CD8-positive, alpha-beta memory T cell (primary cell): ENCODE measurements at regions of chr17 and their contacts with region 1.

Region 1: GRCh38 chr17:7687908-7688807 is at the start of gene WRAP53:
- DNase-seq: peak; percentile 88 to 96 (median 94)
- H3K4me3 ChIP-seq: peak within 1 kb of the TSS; percentile 99
- H3K4me3 Mint-ChIP-seq: peak within 1 kb of the TSS; percentile 93 to 99 (median 98)
- H3K27ac ChIP-seq: peak within 1 kb of the TSS; percentile 99
- H3K27ac Mint-ChIP-seq: peak within 1 kb of the TSS; percentile 98 to 100 (median 100)
- H3K4me1 ChIP-seq: peaks cover 37% of the 10 kb centered on the region
- H3K4me1 Mint-ChIP-seq: peaks cover 39 to 55% (median 44%) of the 10 kb centered on the region in 3 donors
- H3K27me3 ChIP-seq: no peaks in the 10 kb centered on the region
- H3K27me3 Mint-ChIP-seq: peaks cover 0 to 7% of the 10 kb centered on the region in 2 donors
- total RNA-seq, gene WRAP53: 29.1 to 31.3 TPM

Region 2: GRCh38 chr17:7484067-7484918 is 203.9 kb before region 1 on chr17 and contains the start of gene POLR2A:
- CTCF ChIA-PET with region 1: interaction called, 3 read pairs
- POLR2A ChIA-PET with region 1: interaction called, 29 read pairs
- DNase-seq: peak; percentile 95 to 99 (median 98)
- H3K4me3 ChIP-seq: peak within 1 kb of the TSS; percentile 91
- H3K4me3 Mint-ChIP-seq: peak within 1 kb of the TSS; percentile 96 to 100 (median 98)
- H3K27ac ChIP-seq: peak within 1 kb of the TSS; percentile 98
- H3K27ac Mint-ChIP-seq: peak within 1 kb of the TSS; percentile 99 to 100 (median 100)
- H3K4me1 ChIP-seq: peaks cover 49% of the 10 kb centered on the region
- H3K4me1 Mint-ChIP-seq: peaks cover 56 to 80% (median 73%) of the 10 kb centered on the region in 3 donors
- H3K27me3 ChIP-seq: no peaks in the 10 kb centered on the region
- H3K27me3 Mint-ChIP-seq: peaks cover 0 to 12% of the 10 kb centered on the region in 2 donors
- total RNA-seq, gene POLR2A: 190 to 192 TPM

Region 3: GRCh38 chr17:7572588-7573323 is 115.4 kb before region 1 on chr17:
- CTCF ChIA-PET with region 1: interaction called, 8 read pairs
- POLR2A ChIA-PET with region 1: interaction called, 24 read pairs
- DNase-seq: peak; percentile 99 to 100 (median 100)
- H3K4me3 ChIP-seq: peak overlapping the region; percentile 98
- H3K4me3 Mint-ChIP-seq: peak overlapping the region; percentile 93 to 98 (median 96)
- H3K27ac ChIP-seq: peak overlapping the region; percentile 99
- H3K27ac Mint-ChIP-seq: peak overlapping the region; percentile 96 to 100 (median 98)
- H3K4me1 ChIP-seq: peaks cover 31% of the 10 kb centered on the region
- H3K4me1 Mint-ChIP-seq: peaks cover 39 to 55% (median 48%) of the 10 kb centered on the region in 3 donors
- H3K27me3 ChIP-seq: no peaks in the 10 kb centered on the region
- H3K27me3 Mint-ChIP-seq: peaks cover 0 to 7% of the 10 kb centered on the region in 2 donors

Region 4: DNA sequence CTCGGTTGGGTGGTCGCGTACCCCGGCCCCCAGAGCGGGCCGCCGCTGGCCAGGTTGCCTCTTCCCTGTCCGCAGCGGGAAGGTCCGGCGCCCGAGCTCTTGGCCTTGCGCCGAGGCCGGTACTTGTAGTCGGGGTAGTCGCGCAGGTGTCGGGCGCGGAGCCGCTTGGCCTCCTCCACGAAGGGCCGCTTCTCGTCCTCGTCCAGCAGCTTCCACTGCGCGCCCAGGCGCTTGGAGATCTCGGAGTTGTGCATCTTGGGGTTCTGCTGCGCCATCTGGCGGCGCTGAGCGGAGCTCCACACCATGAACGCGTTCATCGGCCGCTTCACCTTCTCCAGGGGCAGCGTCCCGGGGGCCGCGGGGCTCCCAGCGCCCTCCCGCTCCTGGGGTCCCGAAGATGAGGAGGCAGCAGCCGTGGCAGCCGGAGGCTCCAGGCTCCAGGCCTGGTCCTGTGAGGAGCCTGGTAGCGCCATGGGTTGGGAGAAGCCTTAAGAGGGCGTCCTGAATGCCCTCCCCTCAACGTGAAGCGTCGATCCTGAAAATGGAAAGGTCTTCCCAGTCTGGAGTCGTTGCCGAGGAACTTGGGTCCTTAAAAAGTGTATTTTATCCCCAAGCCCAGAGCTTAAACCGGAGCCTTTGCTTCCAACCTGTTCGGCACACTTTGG is 98.8 kb before region 1 on chr17:
- CTCF ChIA-PET with region 1: interaction called, 33 read pairs
- POLR2A ChIA-PET with region 1: interaction called, 70 read pairs
- DNase-seq: peak; percentile 37 to 76 (median 47)
- H3K4me3 ChIP-seq: no peak overlapping the region
- H3K4me3 Mint-ChIP-seq: peak overlapping the region in 1 of 7 donors; percentile 65
- H3K27ac ChIP-seq: no peak overlapping the region
- H3K27ac Mint-ChIP-seq: peak overlapping the region in 1 of 8 donors; percentile 83
- H3K4me1 ChIP-seq: peaks cover 8% of the 10 kb centered on the region
- H3K4me1 Mint-ChIP-seq: peaks cover 7 to 13% (median 12%) of the 10 kb centered on the region in 3 donors
- H3K27me3 ChIP-seq: no peaks in the 10 kb centered on the region
- H3K27me3 Mint-ChIP-seq: no peaks in the 10 kb centered on the region

Region 5: DNA sequence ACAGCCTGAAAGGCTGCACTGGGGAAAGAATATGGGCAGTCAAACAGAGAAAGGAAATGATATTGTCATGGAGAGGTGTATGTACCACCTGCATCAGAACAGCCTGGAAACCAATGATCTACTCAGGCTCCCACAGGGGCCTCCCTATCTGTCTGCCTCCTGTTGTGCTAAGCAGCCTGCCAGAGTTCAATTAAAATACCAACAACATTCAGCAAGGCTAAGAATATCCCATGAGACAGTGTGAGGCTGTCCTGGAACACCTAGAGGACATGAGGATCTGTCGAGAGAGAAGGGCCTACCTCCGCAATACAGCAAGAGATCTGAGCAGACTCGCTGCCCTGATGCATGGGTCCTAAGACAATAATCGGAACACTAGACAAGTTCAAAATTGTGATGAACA is 81.9 kb before region 1 on chr17:
- CTCF ChIA-PET with region 1: no interaction called
- POLR2A ChIA-PET with region 1: no interaction called
- DNase-seq: no peak
- H3K4me3 ChIP-seq: no peak overlapping the region
- H3K4me3 Mint-ChIP-seq: no peak overlapping the region
- H3K27ac ChIP-seq: no peak overlapping the region
- H3K27ac Mint-ChIP-seq: peak overlapping the region in 2 of 8 donors; percentile 19 to 63
- H3K4me1 ChIP-seq: no peaks in the 10 kb centered on the region
- H3K4me1 Mint-ChIP-seq: peaks cover 21 to 27% (median 25%) of the 10 kb centered on the region in 3 donors
- H3K27me3 ChIP-seq: no peaks in the 10 kb centered on the region
- H3K27me3 Mint-ChIP-seq: no peaks in the 10 kb centered on the region

Region 6: GRCh38 chr17:7627250-7628121 is 60.7 kb before region 1 on chr17 and contains the start of gene SAT2:
- CTCF ChIA-PET with region 1: interaction called, 33 read pairs
- POLR2A ChIA-PET with region 1: interaction called, 42 read pairs
- DNase-seq: peak; percentile 80 to 93 (median 82)
- H3K4me3 ChIP-seq: peak within 1 kb of the TSS; percentile 90
- H3K4me3 Mint-ChIP-seq: peak within 1 kb of the TSS; percentile 90 to 95 (median 93)
- H3K27ac ChIP-seq: peak within 1 kb of the TSS; percentile 69
- H3K27ac Mint-ChIP-seq: peak within 1 kb of the TSS; percentile 70 to 97 (median 91)
- H3K4me1 ChIP-seq: peaks cover 10% of the 10 kb centered on the region
- H3K4me1 Mint-ChIP-seq: peaks cover 12 to 20% (median 13%) of the 10 kb centered on the region in 3 donors
- H3K27me3 ChIP-seq: no peaks in the 10 kb centered on the region
- H3K27me3 Mint-ChIP-seq: no peaks in the 10 kb centered on the region
- total RNA-seq, gene SAT2: 18.4 to 21.6 TPM

Region 7: DNA sequence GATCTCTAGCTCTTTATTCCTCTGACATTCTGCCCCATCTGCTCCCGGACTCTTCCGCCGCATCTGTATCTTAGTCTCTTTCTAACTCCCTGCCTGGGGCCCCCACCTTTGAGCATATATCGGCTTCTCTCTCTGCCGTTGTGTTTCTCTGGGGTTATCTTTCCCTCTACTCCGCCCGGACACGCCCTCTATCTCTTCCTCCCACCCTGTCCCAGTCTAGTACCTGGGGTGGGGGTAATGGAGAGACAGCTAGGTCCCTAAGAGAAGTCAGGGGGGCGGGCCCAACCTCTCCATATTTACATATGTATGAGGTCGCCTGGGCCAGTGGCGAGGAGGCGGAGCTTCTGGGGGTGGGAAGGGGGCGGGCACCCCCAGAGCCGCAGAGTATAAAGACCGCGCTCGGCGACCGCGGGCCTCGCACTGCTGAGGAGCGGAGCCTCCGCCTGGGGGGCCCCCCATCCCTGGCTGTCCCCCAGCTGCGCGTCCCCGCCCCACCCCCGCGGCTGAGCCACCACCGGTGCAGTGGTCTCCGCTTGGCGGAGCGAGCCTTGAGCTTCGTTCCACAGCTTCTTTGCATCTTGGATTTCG is 37.6 kb before region 1 on chr17 and contains the start of gene ATP1B2:
- CTCF ChIA-PET with region 1: interaction called, 10 read pairs
- POLR2A ChIA-PET with region 1: interaction called, 23 read pairs
- DNase-seq: peak; percentile 59 to 84 (median 72)
- H3K4me3 ChIP-seq: peak within 1 kb of the TSS; percentile 64
- H3K4me3 Mint-ChIP-seq: peak within 1 kb of the TSS; percentile 80 to 90 (median 87)
- H3K27ac ChIP-seq: no peak within 1 kb of the TSS
- H3K27ac Mint-ChIP-seq: peak within 1 kb of the TSS in 7 of 8 donors; percentile 33 to 75 (median 60)
- H3K4me1 ChIP-seq: peaks cover 9% of the 10 kb centered on the region
- H3K4me1 Mint-ChIP-seq: peaks cover 10 to 22% (median 15%) of the 10 kb centered on the region in 3 donors
- H3K27me3 ChIP-seq: peaks cover 18% of the 10 kb centered on the region
- H3K27me3 Mint-ChIP-seq: peaks cover 38 to 43% of the 10 kb centered on the region in 2 donors
- total RNA-seq, gene ATP1B2: 0.40 to 0.53 TPM